GM18951 (cell line): ENCODE measurements at regions of chr9 and their contacts with region 1.

Region 1: DNA sequence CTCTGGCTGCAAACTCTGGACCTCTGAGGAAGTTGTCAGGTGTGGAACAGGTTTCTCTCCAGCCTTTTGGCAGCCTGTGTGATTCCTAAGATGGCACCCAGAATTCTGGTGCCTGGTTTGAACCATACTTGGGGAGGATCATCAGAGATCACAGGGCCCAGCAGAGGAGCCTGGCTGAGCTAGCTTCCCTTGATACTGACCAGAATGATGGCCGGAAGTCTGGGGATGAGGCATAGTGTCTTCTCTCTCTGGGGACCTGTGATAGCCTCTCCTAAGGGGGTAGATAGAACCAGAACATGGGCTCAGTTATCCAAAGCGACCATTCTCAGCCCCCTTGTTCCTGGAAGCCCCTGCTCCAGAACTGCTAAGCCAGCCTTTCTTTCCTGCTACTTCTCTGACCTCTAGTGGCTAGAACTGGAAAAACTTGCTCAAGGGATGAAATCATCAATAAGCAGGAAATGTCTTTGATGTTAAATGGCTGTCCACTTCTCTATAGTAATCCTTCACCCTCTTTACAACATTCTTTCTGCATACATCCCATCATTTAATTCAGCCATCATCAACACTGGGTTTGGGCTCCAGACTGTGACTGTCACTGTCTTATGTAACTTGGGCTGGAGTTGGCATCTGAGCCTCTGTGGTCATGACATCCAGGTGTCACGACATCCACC is 55.1 kb downstream of the C9orf152 start:
- POLR2A ChIP-seq: no peak

Region 2: GRCh38 chr9:109894921-109895758 is 257.7 kb before region 1 on chr9:
- in situ Hi-C with region 1: loop called (anchors 5 kb)
- POLR2A ChIP-seq: no peak

Region 3: DNA sequence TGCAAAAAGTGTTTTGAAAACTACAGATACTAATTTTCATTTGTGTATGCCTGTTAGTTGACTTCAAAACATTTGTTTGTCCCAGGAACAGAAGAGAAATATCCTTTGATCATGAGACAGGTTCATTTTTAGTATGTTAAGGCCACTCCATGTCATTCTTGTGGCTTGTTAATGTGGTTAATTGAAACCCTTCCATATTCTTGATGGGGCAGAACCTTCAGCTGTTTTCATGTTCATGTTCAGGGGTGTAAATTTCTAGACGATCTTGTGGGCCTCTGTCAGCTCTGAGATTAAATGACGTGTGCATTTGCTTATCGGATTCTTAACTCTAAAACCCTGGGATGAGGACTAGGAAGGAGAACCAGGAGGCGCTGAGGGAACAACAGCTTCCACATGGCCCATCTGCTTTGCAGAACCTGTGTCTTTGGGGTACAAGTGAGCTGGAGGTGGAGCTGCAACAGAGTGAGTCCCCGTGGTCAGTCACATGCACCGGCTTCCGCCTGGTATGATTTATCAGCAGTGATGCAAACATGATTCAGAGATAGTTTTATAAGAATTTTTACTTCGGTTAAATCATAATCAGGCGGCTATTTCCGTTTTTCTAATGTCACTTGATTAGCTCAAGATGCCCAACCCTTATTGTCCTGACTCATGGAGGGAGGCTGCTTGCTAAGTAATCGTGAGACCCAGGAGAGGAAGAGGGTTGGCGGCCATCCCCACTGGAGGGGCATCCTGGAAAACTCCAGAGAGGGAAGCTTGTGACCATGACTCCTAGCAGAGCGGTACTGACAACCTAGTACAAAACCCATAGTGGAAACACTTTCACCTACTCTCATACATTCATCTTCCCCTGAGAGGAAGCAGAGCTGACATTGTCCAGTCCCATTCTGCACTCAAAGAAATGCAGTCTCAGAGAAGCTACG is 83.3 kb before region 1 on chr9:
- in situ Hi-C with region 1: loop called (anchors 5 kb)
- POLR2A ChIP-seq: no peak